Common myeloid progenitor, CD34-positive (primary cell): ENCODE measurements at regions of chr17 and their contacts with region 1.

Region 1: GRCh38 chr17:52885882-52886281 is 727.4 kb upstream of the CA10 start:
- DNase-seq: no peak
- H3K4me3 ChIP-seq: no peak overlapping the region
- H3K27ac ChIP-seq: no peak overlapping the region
- H3K4me1 ChIP-seq: no peaks in the 10 kb centered on the region
- H3K27me3 ChIP-seq: peaks cover 0 to 8% (median 0%) of the 10 kb centered on the region in 5 experiments

Region 2: GRCh38 chr17:52762147-52762793 is 123.6 kb before region 1 on chr17:
- CTCF ChIA-PET with region 1: no interaction called
- POLR2A ChIA-PET with region 1: interaction called, 10 read pairs
- DNase-seq: no peak
- H3K4me3 ChIP-seq: no peak overlapping the region
- H3K27ac ChIP-seq: no peak overlapping the region
- H3K4me1 ChIP-seq: no peaks in the 10 kb centered on the region
- H3K27me3 ChIP-seq: no peaks in the 10 kb centered on the region

Region 3: GRCh38 chr17:52776234-52776633 is 109.6 kb before region 1 on chr17:
- CTCF ChIA-PET with region 1: no interaction called
- POLR2A ChIA-PET with region 1: no interaction called
- DNase-seq: no peak
- H3K4me3 ChIP-seq: no peak overlapping the region
- H3K27ac ChIP-seq: no peak overlapping the region
- H3K4me1 ChIP-seq: no peaks in the 10 kb centered on the region
- H3K27me3 ChIP-seq: no peaks in the 10 kb centered on the region